PC-3 (cell line): ENCODE measurements at regions of chr1 and their contacts with region 1.

Region 1: DNA sequence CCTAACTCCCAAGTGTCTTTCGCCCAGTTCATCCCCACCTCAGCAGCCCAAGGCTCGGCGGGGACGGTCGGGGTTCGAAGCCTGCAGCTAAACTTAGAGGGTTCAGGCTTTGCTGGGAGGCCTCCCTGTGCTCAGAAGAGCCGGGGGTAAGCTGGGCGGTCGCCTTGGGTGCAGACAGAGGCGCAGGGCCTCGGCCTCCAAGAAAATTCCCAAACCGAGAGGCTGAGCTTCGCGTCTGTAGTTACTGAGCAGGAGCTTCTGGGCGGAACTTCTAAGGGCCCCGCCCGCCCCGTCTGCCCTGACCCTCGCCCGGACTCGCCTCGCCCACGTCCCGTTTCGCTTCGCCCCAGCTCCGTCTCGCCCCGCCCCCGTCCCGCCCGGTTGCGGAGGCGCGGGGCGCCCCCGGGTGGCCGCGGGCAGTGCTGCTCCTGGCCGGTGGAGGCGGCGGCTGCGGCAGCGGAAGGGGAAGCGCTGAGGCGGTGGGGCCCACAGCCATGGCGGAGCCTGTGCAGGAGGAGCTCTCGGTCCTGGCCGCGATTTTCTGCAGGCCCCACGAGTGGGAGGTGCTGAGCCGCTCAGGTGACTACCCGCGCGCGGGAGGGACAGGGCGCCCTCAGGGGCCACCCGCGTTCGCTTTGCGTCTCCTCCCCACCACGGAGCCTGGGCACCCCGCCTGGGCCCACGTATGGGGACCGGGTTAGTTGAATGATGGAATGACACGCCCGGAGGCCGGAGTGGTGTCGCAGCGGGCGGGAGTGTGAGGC is at the start of gene RWDD3:
- DNase-seq: peak; percentile 95
- ATAC-seq: peak; percentile 92
- H3K4me3 ChIP-seq: peak within 1 kb of the TSS; percentile 94
- H3K27ac ChIP-seq: peak within 1 kb of the TSS; percentile 21; the same call in 1 of the 2 replicates
- H3K4me1 ChIP-seq: peaks cover 28% of the 10 kb centered on the region
- H3K27me3 ChIP-seq: no peaks in the 10 kb centered on the region
- CTCF ChIP-seq: peak; percentile 75
- total RNA-seq, gene RWDD3: 10.3 and 10.4 TPM in 2 replicates

Region 2: DNA sequence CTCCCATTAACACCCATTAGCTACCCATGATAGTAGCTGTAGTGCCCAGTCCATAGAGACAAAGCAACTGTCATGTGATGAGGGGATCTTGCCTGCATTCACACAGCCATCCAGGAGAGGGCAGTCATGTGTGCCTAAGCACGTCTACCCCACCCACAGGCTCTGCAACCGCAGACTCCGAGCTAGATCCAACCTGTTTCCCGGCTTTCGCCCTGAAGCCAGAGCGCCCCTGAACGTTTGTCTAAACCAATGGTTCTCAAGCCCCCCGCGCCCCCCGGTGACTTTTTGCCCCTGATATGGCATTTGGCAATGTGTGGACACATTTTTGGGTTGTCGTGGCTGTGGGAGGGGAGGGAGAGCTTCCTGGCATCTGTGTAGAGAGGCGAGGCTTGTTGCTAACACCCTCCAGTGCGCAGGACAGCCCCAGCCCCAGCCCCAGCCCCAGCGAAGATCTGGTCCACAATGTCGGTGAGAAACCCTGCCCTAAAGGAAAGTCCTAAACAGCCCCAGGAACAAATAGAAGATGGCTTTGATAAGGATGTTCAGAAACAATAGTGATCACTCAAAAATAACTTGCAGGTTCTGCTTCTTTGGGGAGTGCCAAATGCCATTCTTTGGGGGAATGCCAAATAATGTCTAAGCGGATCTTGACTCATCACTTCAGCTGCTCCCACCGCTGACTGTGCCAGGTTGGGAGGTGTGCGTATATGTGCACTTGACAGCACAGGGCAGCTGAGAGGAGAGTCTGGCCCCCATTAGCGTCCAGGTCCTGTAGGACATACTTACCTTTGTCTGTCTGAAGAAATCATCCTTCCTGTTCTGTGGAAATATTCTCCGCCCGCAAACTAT is 379.2 kb before region 1 on chr1:
- CTCF ChIA-PET with region 1: interaction called, 11 read pairs
- POLR2A ChIA-PET with region 1: interaction called, 7 read pairs
- intact Hi-C with region 1: loop called (anchors 1 kb)
- DNase-seq: peak; percentile 99
- ATAC-seq: peak; percentile 84
- H3K4me3 ChIP-seq: peak overlapping the region; percentile 65
- H3K27ac ChIP-seq: peak overlapping the region; percentile 97
- H3K4me1 ChIP-seq: peaks cover 60% of the 10 kb centered on the region
- H3K27me3 ChIP-seq: no peaks in the 10 kb centered on the region
- CTCF ChIP-seq: peak; percentile 92

Region 3: DNA sequence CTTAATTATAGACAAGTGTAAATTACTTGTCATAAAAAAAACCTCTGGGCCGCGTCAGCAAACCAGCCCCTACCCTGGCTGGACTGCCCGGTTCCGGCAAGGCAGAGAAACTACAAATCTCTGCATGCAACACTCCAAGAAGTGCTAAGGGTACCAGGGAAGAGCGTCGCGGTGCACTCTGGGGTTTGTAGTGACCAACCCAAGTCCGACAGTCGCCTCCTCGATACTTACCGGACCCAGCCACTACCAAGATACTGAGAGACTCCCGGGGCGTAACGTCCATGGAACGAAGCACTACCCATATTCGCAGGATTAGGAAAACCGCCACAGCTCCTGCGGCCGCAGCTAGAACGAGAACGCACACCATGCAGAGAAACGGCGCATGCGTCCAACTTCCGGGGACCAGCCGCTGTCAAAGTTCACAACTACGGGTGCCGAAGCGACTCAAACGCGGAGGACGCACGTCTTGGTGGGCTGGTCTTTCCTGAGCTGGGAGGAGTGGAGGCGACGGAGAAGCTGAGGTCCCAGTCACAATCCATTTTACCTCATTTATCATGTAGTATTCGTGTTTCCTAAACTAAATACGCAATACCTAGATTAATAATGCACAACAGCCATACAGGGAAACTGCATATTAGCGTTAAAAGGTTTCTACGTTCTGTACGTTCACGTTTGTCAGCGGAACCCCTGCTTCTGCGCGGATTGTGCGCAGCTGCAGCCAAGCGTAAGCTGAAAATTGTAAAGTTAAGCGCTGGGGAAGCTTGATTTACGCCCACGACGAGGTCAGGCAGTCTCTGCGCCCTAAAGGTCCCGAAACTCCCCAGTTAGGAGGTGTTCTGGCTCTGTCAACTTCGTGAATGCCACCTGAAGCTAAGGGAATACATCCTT is 161.1 kb before region 1 on chr1 and contains the start of gene ALG14:
- CTCF ChIA-PET with region 1: interaction called, 20 read pairs
- POLR2A ChIA-PET with region 1: interaction called, 33 read pairs
- intact Hi-C with region 1: loop called (anchors 1 kb)
- DNase-seq: peak; percentile 94
- ATAC-seq: peak; percentile 99
- H3K4me3 ChIP-seq: peak within 1 kb of the TSS; percentile 91
- H3K27ac ChIP-seq: peak within 1 kb of the TSS; percentile 78
- H3K4me1 ChIP-seq: peaks cover 16% of the 10 kb centered on the region
- H3K27me3 ChIP-seq: no peaks in the 10 kb centered on the region
- CTCF ChIP-seq: no peak
- total RNA-seq, gene ALG14: 3.4 and 9.7 TPM in 2 replicates

Region 4: DNA sequence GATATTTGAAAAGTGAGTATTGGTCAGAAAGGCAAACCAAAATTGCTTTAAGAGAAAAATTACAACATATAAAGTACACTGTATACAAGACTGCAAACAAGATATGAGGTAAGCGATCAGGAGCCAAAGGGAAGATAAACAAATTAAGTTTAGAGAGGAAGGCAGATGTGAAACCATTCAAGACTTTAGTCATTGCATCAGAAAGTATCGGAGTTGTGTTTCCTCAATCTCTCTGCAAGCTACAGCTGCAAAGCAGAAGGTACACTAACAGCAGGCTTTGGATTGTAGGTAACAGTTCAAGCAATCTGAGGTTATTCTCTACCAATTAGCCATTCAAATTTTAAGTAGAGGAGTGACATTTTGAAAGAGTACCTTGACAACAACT is 138.1 kb before region 1 on chr1:
- CTCF ChIA-PET with region 1: no interaction called
- POLR2A ChIA-PET with region 1: no interaction called
- intact Hi-C with region 1: loop called (anchors 5 kb)
- DNase-seq: peak; percentile 54
- ATAC-seq: peak; percentile 47
- H3K4me3 ChIP-seq: peak overlapping the region; percentile 24
- H3K27ac ChIP-seq: peak overlapping the region; percentile 76
- H3K4me1 ChIP-seq: peaks cover 28% of the 10 kb centered on the region
- H3K27me3 ChIP-seq: no peaks in the 10 kb centered on the region
- CTCF ChIP-seq: no peak

Region 5: GRCh38 chr1:95223110-95223509 is 10.8 kb before region 1 on chr1:
- CTCF ChIA-PET with region 1: interaction called, 13 read pairs
- POLR2A ChIA-PET with region 1: interaction called, 10 read pairs
- intact Hi-C with region 1: no loop called
- DNase-seq: peak; percentile 60
- ATAC-seq: peak; percentile 70
- H3K4me3 ChIP-seq: no peak overlapping the region
- H3K27ac ChIP-seq: no peak overlapping the region
- H3K4me1 ChIP-seq: peaks cover 34% of the 10 kb centered on the region
- H3K27me3 ChIP-seq: no peaks in the 10 kb centered on the region
- CTCF ChIP-seq: no peak